HCT116 (cell line): ENCODE measurements at regions of chr19 and their contacts with region 1.

Region 1: DNA sequence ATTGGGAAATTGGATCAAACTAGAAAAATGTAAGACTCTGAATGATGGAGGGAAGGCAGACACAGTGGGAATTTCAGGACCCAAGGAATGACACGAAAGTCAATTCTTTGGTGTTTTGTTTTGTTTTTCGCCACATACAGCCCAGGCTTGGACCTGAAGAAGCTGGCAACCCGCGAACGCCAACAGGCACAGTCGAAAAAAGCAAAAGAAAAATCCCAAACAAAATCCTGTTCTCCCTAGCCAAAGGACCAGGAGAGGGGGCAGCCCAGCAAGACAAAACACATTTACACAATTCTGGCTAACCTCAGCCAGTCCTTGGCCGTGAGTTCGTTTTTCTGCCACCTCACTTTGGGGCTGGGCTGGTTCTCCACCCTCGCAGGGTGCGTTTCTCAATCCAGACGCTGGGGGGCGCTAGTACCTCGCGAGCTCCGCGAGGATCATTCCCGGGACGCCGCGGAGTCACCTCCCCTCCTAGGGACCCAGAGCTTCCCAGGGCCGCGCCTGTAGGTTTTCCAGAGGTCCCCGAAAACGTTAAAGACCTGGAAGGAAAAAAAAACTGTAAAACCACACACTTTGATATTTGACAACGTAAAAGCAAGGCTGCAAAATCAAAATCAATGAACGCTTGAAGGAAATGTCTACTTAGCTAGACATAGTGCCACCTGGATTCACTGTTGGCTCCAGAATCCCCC is 34.9 kb upstream of the TPM4 start:
- DNase-seq: peak; percentile 49
- ATAC-seq: peak; percentile 99
- H3K4me3 ChIP-seq: peak overlapping the region; percentile 11 to 39; a peak in 3 of 4 replicates
- H3K27ac ChIP-seq: no peak overlapping the region
- H3K4me1 ChIP-seq: peaks cover 0 to 13% of the 10 kb centered on the region in 2 experiments; a peak in 2 of 4 replicates
- H3K27me3 ChIP-seq: no peaks in the 10 kb centered on the region
- CTCF ChIP-seq: peak; percentile 92 to 97 (median 92)
- POLR2A ChIP-seq: no peak
- RAD21 ChIP-seq: peak; percentile 99

Region 2: GRCh38 chr19:16025108-16026101 is 16.0 kb before region 1 on chr19:
- CTCF ChIA-PET with region 1: interaction called, 18 read pairs
- POLR2A ChIA-PET with region 1: no interaction called
- RAD21 ChIA-PET with region 1: no interaction called
- intact Hi-C with region 1: no loop called
- DNase-seq: peak; percentile 56
- ATAC-seq: peak; percentile 99
- H3K4me3 ChIP-seq: no peak overlapping the region
- H3K27ac ChIP-seq: no peak overlapping the region
- H3K4me1 ChIP-seq: peaks cover 0 to 11% of the 10 kb centered on the region in 2 experiments; a peak in 2 of 4 replicates
- H3K27me3 ChIP-seq: no peaks in the 10 kb centered on the region
- CTCF ChIP-seq: peak; percentile 56 to 81 (median 63); a peak in 5 of 6 replicates
- POLR2A ChIP-seq: no peak
- RAD21 ChIP-seq: peak; percentile 75

Region 3: DNA sequence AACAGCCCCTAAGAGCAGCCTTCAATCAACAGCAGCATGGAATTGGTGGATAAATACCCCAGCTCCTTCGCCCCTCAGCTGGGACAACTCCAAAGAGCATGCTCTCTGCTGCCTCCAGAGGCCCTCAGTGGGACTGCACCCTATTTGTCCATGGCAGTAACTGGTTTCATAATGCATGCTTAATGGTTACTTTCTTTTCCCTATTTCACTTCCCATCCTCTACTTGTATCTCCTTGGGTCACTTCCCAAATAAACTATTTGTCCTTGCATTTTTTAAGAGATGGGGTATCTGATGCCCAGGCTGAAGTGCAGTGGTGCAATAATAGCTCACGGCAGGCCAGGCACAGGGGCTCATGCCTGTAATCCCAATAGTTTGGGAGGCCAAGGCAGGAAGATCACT is 21.3 kb after region 1 on chr19:
- CTCF ChIA-PET with region 1: interaction called, 10 read pairs
- POLR2A ChIA-PET with region 1: no interaction called
- RAD21 ChIA-PET with region 1: interaction called in 1 of 2 experiments, 3 read pairs
- intact Hi-C with region 1: no loop called
- DNase-seq: no peak
- ATAC-seq: no peak; the same call in 1 of the 2 replicates
- H3K4me3 ChIP-seq: no peak overlapping the region
- H3K27ac ChIP-seq: no peak overlapping the region
- H3K4me1 ChIP-seq: peaks cover 0 to 34% of the 10 kb centered on the region in 2 experiments; a peak in 3 of 4 replicates
- H3K27me3 ChIP-seq: no peaks in the 10 kb centered on the region
- CTCF ChIP-seq: peak in 2 of 3 experiments; percentile 94 to 98; a peak in 4 of 6 replicates
- POLR2A ChIP-seq: no peak
- RAD21 ChIP-seq: no peak

Region 4: GRCh38 chr19:16111160-16111908 is 69.9 kb after region 1 on chr19 and contains the start of gene RAB8A:
- CTCF ChIA-PET with region 1: interaction called, 17 read pairs
- POLR2A ChIA-PET with region 1: no interaction called
- RAD21 ChIA-PET with region 1: interaction called, 3 to 5 read pairs
- intact Hi-C with region 1: loop called (anchors 1 kb)
- DNase-seq: peak; percentile 97
- ATAC-seq: peak; percentile 95
- H3K4me3 ChIP-seq: peak within 1 kb of the TSS; percentile 74 to 97
- H3K27ac ChIP-seq: peak within 1 kb of the TSS; percentile 88
- H3K4me1 ChIP-seq: peaks cover 14 to 37% of the 10 kb centered on the region in 2 experiments
- H3K27me3 ChIP-seq: no peaks in the 10 kb centered on the region
- CTCF ChIP-seq: peak; percentile 77 to 85 (median 85)
- POLR2A ChIP-seq: no peak
- RAD21 ChIP-seq: peak; percentile 78
- total RNA-seq, gene RAB8A: 116 TPM

Region 5: GRCh38 chr19:16247353-16248182 is 206.1 kb after region 1 on chr19:
- CTCF ChIA-PET with region 1: interaction called, 3 read pairs
- POLR2A ChIA-PET with region 1: no interaction called
- RAD21 ChIA-PET with region 1: no interaction called
- intact Hi-C with region 1: loop called (anchors 5 kb)
- DNase-seq: peak; percentile 68
- ATAC-seq: peak; percentile 100
- H3K4me3 ChIP-seq: no peak overlapping the region
- H3K27ac ChIP-seq: no peak overlapping the region
- H3K4me1 ChIP-seq: peaks cover 0 to 7% of the 10 kb centered on the region in 2 experiments; a peak in 2 of 4 replicates
- H3K27me3 ChIP-seq: no peaks in the 10 kb centered on the region
- CTCF ChIP-seq: peak; percentile 94 to 97 (median 94)
- POLR2A ChIP-seq: no peak
- RAD21 ChIP-seq: peak; percentile 100

Region 6: DNA sequence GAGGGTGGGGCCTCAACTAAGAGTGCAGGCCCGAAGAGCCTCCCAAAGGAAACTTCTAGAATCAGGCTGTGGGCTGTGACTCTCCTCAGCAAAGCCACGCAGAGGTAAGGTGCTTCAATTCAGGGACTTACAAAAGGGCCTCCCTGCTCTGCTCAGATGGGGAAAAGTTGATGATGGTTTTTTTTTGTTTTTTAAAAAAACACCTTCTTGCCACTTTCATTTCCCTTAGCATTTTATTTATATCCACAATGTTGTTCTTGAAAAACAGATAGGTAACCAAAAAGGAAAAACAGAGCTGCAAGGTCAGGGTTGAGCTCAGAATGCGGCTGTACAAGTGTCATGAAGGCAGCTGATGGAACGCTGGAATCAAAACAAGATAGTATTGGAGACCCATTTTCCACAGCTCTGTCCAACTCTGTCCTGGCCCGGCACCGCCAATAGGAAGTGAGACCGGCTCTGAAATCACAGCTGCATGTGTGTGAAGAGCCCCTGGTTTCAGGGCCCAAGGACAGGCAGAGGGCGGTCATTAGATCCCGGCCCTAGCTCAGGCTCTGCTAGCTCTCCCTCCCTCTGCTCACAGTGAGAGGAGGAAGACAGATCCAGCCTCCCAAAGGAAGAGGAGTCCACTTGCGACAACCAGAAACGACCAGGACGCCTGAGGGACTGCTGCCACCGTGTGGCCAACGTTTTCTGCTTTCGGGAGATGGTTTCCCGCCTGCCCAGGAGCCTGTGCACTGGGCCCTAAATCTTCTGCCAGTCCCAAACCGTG is 341.5 kb after region 1 on chr19:
- CTCF ChIA-PET with region 1: interaction called, 6 read pairs
- POLR2A ChIA-PET with region 1: no interaction called
- RAD21 ChIA-PET with region 1: no interaction called
- intact Hi-C with region 1: loop called (anchors 5 kb)
- DNase-seq: peak; percentile 56
- ATAC-seq: peak; percentile 87
- H3K4me3 ChIP-seq: no peak overlapping the region
- H3K27ac ChIP-seq: no peak overlapping the region
- H3K4me1 ChIP-seq: no peaks in the 10 kb centered on the region
- H3K27me3 ChIP-seq: no peaks in the 10 kb centered on the region
- CTCF ChIP-seq: peak; percentile 75 to 87 (median 75)
- POLR2A ChIP-seq: no peak
- RAD21 ChIP-seq: peak; percentile 97